HCT116 (cell line): ENCODE measurements at regions of chr7 and their contacts with region 1.

Region 1: GRCh38 chr7:36512616-36513015 is 123.0 kb downstream of the ANLN start:
- DNase-seq: no peak
- ATAC-seq: no peak
- H3K4me3 ChIP-seq: no peak overlapping the region
- H3K27ac ChIP-seq: no peak overlapping the region
- H3K4me1 ChIP-seq: no peaks in the 10 kb centered on the region
- H3K27me3 ChIP-seq: no peaks in the 10 kb centered on the region
- CTCF ChIP-seq: no peak
- POLR2A ChIP-seq: no peak
- RAD21 ChIP-seq: no peak

Region 2: DNA sequence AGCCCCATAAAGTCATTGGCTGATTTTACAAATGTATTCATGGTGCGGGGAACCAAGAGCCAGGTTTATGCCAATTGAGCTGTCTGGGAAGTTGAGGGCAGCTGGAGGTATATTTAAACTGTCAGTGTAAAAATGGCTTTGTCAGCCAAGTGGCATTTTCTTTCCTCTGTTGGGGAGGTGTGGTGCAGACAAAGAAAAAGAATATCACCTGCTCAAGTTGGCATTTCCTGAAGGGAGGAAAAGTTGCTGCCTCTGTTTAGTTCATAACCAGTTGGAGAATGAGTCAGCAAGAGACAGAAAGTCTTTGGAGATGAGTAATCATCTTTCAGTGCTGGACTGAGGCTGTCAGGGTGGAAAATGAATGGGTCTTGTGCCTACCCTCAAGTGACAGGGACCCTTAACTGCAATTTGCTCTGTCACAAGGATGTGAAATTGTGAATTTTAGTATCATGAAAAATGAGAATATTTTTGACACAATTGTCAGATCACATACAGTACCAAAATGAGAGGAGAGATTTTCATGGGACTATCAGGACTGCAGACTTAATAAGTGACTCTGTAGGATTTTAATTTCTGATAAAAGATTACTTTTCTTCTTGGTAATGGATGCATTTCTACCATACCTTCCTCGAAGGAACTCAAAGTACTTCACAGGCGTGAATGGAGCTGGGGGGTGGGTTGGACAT is 14.4 kb after region 1 on chr7:
- CTCF ChIA-PET with region 1: no interaction called
- POLR2A ChIA-PET with region 1: no interaction called
- RAD21 ChIA-PET with region 1: no interaction called
- intact Hi-C with region 1: loop called (anchors 1 kb)
- DNase-seq: peak; percentile 44
- ATAC-seq: peak; percentile 92
- H3K4me3 ChIP-seq: 0 out of 4 replicates have a peak overlapping the region, but pooled peaks of 1 of the 2 experiments have one; percentile 5
- H3K27ac ChIP-seq: peak overlapping the region; percentile 23; the same call in 1 of the 2 replicates
- H3K4me1 ChIP-seq: peaks cover 5 to 18% of the 10 kb centered on the region in 2 experiments; a peak in 3 of 4 replicates
- H3K27me3 ChIP-seq: no peaks in the 10 kb centered on the region
- CTCF ChIP-seq: no peak
- POLR2A ChIP-seq: no peak
- RAD21 ChIP-seq: no peak